ENCODE measurements at regions of chr9 and their contacts with region 1.

Region 1: DNA sequence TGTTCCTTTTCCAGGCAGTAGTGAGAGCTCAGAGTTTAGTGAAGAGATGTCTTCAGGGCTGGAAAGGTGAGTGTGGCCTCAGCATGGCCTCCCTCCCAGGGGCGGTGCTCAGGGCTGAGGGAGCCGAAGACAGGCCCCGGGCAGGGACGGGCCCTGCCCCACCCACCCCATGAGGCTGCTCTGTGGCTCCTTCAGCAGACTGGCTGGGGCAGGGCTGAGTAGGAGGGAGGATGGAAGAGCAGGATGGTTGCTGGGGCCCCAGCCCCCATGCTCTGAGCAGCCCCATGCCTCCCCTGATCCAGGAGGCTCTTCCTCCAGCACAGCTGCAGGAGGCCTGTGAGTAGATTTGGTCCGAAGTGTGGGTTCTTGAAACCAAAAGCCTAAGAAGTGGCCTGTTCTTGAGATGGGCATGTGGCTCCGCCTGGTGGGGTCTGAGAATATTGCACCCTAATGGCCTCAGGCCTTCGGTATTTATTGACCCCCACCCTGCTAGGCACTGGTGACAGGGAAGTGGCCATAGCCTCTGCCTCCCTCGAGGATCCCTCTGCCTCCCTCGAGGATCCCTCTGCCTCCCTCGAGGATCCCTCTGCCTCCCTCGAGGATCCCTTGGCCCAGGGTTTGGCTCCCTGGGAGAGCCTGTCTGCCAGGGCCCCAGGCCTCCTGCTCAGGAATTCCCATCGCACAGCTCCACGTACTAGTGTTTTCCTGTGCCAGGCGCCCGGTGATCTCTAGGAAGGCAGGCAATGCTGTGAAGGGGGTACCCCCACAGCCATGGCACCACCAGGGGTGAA is 65.4 kb upstream of the GARNL3 start:
- DNase-seq: peak; percentile 76
- ATAC-seq: peak; percentile 70

Region 2: GRCh38 chr9:126939821-126940221 is 259.4 kb before region 1 on chr9:
- intact Hi-C with region 1: loop called (anchors 1 kb)
- DNase-seq: no peak
- ATAC-seq: no peak

Region 3: GRCh38 chr9:126965541-126966428 is 233.4 kb before region 1 on chr9:
- intact Hi-C with region 1: loop called (anchors 1 kb)
- DNase-seq: no peak
- ATAC-seq: peak; percentile 79